Activated T-helper 2 cell treated with anti-CD3 and anti-CD28 coated beads, Interferon-gamma antibody, Interleukin-2, Interleukin-4, amounts not matched to agents 10 μg/mL and 5 μg/mL and 100 μg/mL, durations not matched to agents 14 hours and 24 hours and 36 hours (primary cell): ENCODE measurements at regions of chr2 and their contacts with region 1.

Region 1: GRCh38 chr2:24971536-24972314 is at the start of gene DNAJC27:
- DNase-seq: peak; percentile 97
- H3K4me3 Mint-ChIP-seq: peak within 1 kb of the TSS; percentile 96
- H3K27ac Mint-ChIP-seq: peak within 1 kb of the TSS; percentile 100
- H3K4me1 Mint-ChIP-seq: peaks cover 17% of the 10 kb centered on the region
- H3K27me3 Mint-ChIP-seq: peaks cover 1% of the 10 kb centered on the region
- total RNA-seq, gene DNAJC27: 4.9 and 6.1 TPM in 2 replicates

Region 2: GRCh38 chr2:23939987-23940717 is 1031.6 kb before region 1 on chr2 and contains the start of gene UBXN2A:
- intact Hi-C with region 1: loop called (anchors 10 kb)
- DNase-seq: peak; percentile 75
- H3K4me3 Mint-ChIP-seq: peak within 1 kb of the TSS; percentile 92
- H3K27ac Mint-ChIP-seq: peak within 1 kb of the TSS; percentile 89
- H3K4me1 Mint-ChIP-seq: peaks cover 27% of the 10 kb centered on the region
- H3K27me3 Mint-ChIP-seq: peaks cover 4% of the 10 kb centered on the region
- total RNA-seq, gene UBXN2A: 17.6 and 18.3 TPM in 2 replicates

Region 3: DNA sequence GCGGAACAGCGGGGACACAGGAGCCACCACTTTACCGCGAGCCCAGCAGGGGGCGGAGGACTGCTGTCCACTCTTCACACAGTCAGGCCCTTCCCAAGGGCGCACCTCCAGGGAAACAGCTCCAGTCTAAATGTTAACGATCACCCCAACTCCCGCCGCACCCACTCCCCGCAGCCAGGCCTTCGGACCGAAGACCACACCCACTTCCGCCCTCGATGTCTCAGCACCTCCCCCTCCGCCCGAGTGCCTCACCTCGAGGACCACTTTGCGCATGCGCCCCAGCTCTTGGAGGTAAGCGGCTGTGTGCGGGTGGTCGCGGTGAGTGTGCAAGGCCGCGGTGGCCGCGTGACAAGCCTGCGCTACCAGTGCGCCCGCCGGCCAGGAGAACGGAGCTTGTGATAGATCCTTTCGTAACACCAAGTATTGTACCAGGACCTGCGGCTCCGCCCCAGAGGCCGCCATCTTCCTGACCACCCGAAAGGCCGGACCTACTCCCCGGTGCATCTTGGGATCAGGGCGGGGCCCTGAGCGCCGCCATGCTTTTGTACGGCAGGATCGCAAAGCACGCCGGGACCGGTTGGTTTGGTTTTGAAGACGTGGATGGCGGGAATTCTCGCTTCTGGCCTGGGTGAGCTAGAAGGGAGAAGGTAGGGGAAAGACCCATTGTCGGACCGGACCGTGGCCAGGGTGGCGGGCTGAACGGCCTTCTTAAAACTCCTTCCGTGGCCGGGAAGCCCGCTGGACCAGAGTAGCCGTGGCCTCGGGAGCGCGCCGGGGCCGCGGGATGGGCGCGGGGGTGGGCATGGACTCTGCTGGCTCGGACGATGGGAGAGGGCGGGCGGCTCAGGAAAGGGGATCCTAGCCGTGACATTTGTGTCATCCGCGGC is 178.6 kb before region 1 on chr2 and contains the starts of genes CENPO and PTRHD1:
- intact Hi-C with region 1: loop called (anchors 5 kb)
- DNase-seq: peak; percentile 93
- H3K4me3 Mint-ChIP-seq: peak within 1 kb of the TSS; percentile 95
- H3K27ac Mint-ChIP-seq: peak within 1 kb of the TSS; percentile 99
- H3K4me1 Mint-ChIP-seq: peaks cover 38% of the 10 kb centered on the region
- H3K27me3 Mint-ChIP-seq: no peaks in the 10 kb centered on the region
- total RNA-seq, gene CENPO: 41.8 and 46.4 TPM in 2 replicates
- total RNA-seq, gene PTRHD1: 25.9 and 26.6 TPM in 2 replicates

Region 4: GRCh38 chr2:25041928-25042320 is 70.2 kb after region 1 on chr2 and contains the start of gene EFR3B:
- intact Hi-C with region 1: loop called (anchors 2 kb)
- DNase-seq: peak; percentile 81
- H3K4me3 Mint-ChIP-seq: peak within 1 kb of the TSS; percentile 77
- H3K27ac Mint-ChIP-seq: no peak within 1 kb of the TSS
- H3K4me1 Mint-ChIP-seq: peaks cover 24% of the 10 kb centered on the region
- H3K27me3 Mint-ChIP-seq: peaks cover 49% of the 10 kb centered on the region
- total RNA-seq, gene EFR3B: 0.34 and 0.46 TPM in 2 replicates

Region 5: DNA sequence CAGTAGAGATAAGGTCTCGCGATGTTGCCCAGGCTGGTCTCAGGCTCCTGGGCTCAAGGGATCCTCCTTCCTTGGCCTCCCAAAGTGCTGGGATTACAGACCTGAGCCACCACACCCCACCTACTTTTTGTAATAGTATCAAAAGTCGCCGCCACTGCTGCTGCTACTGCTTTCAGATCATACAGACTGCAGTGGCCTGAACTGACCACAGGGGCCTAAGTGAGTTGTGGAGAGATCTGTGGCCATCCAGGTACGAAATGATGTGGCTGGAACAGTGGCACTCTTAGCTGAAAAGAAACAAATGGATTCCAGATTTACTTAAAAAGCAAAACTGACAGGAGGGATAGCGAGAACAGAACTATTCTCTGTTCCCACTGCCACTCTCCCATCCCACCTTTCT is 229.5 kb after region 1 on chr2:
- intact Hi-C with region 1: loop called (anchors 1 kb)
- DNase-seq: no peak
- H3K4me3 Mint-ChIP-seq: no peak overlapping the region
- H3K27ac Mint-ChIP-seq: no peak overlapping the region
- H3K4me1 Mint-ChIP-seq: peaks cover 2% of the 10 kb centered on the region
- H3K27me3 Mint-ChIP-seq: peaks cover 14% of the 10 kb centered on the region